Posterior vena cava (tissue), 2 donors: ENCODE measurements at regions of chr4 and their contacts with region 1.

Region 1: GRCh38 chr4:162201673-162202072 is 37.9 kb upstream of the FSTL5 start:
- DNase-seq: no peak

Region 2: GRCh38 chr4:163768014-163768413 is 1566.3 kb after region 1 on chr4:
- intact Hi-C with region 1: loop called in 1 of 2 experiments (anchors 5 kb)
- DNase-seq: no peak